ENCODE measurements at regions of chr12 and their contacts with region 1.

Region 1: GRCh38 chr12:20601668-20602280 is 93.4 kb upstream of the SLCO1C1 start:
- DNase-seq: no peak
- ATAC-seq: no peak
- H3K4me3 ChIP-seq: no peak overlapping the region
- H3K27ac ChIP-seq: peak overlapping the region in 3 of 4 donors; percentile 27 to 48 (median 36)
- H3K4me1 ChIP-seq: no peaks in the 10 kb centered on the region
- H3K27me3 ChIP-seq: no peaks in the 10 kb centered on the region
- CTCF ChIP-seq: peak in 2 of 5 experiments; percentile 42 to 44
- POLR2A ChIP-seq: no peak

Region 2: DNA sequence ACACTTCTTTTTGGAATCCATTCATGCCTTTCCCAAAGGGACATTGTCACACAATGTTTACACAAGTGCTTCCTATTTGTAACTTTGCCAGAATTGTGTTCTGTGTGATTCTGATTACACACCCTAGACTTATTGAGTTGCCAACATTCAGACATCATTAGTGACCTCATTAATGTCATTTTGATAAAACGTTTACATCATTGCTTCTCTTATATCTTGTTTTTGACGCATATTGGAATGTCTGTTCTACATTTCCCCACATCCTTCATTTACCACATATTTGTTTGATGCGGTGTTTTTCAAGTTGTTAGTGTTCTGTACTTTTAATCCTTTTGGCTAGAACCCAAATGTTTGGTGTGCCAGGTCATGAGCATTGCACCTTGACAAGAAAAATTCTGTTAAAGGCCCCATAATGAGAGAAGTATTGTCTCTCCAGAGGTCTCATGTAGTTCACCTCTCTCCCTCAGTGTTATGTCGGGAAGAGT is 857.0 kb before region 1 on chr12:
- in situ Hi-C with region 1: no loop called
- intact Hi-C with region 1: loop called (anchors 5 kb)
- DNase-seq: no peak
- ATAC-seq: peak; percentile 36 to 50
- H3K4me3 ChIP-seq: no peak overlapping the region
- H3K27ac ChIP-seq: no peak overlapping the region
- H3K4me1 ChIP-seq: peaks cover 0 to 4% of the 10 kb centered on the region in 2 donors
- H3K27me3 ChIP-seq: no peaks in the 10 kb centered on the region
- CTCF ChIP-seq: no peak
- POLR2A ChIP-seq: no peak

Region 3: DNA sequence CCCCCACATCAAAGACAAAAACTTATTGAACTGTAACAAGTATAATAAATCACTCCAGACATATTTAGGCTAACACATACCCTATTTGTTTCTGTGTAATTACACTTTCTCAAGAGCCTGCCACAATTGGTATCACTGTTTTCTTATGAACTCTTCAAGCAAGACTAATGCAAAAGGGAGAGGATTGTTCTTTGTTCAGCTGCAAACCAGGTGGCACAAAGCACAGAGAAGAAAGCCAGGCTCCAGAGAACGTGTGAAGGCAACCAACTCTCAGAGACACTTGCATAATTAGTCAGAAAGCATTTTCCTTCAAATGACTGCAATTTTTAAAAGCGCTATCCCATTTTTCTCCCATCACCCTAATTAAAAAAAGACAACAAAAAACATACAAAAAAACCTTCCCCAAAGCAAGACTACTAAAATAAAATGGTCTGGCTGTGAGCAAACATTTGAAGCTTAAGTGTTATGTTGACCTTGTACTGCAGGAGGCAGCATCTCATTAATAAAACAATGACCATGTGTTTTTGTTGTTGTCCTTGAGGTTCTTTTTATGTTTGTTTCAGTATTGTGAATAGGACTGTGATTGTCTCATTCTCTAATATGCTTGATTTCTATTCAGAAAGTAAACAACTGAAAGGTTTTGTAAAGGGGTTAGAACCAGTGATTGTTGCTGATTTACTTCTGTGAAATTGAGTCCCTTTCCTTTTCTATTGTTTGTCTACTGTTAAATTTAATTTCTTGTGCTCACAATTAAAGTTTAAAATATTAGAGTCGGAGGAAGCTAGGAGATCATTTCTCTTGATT is 686.2 kb before region 1 on chr12:
- in situ Hi-C with region 1: loop called in 1 of 4 experiments (anchors 25 kb)
- intact Hi-C with region 1: loop called (anchors 5 kb)
- DNase-seq: no peak
- ATAC-seq: no peak
- H3K4me3 ChIP-seq: no peak overlapping the region
- H3K27ac ChIP-seq: no peak overlapping the region
- H3K4me1 ChIP-seq: peaks cover 0 to 6% of the 10 kb centered on the region in 2 donors
- H3K27me3 ChIP-seq: no peaks in the 10 kb centered on the region
- CTCF ChIP-seq: peak; percentile 26 to 48 (median 42)
- POLR2A ChIP-seq: no peak

Region 4: DNA sequence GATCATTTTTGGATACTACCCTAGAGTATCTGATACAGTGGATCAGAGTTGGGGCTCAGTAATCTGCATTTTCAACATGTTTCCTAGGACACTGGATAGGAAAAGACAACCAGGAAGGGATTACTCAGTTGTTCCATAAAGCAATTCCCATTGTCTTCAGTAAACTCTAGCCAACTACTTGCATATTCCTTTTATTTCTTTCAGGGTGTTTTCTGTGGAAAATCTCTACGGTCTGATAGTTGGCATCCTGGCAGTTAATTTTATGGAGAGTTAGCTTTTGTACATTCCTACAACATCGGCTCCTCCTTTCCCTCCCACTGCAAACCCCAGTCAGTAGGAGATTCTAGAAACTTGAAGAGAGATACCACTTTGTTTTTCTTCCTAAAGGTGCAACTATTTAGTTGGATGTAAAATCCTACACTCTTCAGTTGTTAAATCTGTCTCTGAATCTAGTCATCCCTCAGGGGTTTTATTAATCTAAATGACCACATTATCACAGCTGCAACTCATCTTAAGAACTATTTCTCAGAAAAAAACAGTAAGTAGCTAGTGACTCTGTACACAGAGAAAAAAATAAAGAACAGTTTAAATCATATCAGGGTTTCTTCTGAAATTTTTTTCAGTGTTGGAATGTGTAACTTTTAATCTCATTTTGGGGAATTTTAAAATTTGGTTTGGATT is 129.5 kb before region 1 on chr12:
- in situ Hi-C with region 1: no loop called
- intact Hi-C with region 1: loop called (anchors 5 kb)
- DNase-seq: no peak
- ATAC-seq: no peak
- H3K4me3 ChIP-seq: no peak overlapping the region
- H3K27ac ChIP-seq: no peak overlapping the region
- H3K4me1 ChIP-seq: no peaks in the 10 kb centered on the region
- H3K27me3 ChIP-seq: no peaks in the 10 kb centered on the region
- CTCF ChIP-seq: no peak
- POLR2A ChIP-seq: no peak

Region 5: DNA sequence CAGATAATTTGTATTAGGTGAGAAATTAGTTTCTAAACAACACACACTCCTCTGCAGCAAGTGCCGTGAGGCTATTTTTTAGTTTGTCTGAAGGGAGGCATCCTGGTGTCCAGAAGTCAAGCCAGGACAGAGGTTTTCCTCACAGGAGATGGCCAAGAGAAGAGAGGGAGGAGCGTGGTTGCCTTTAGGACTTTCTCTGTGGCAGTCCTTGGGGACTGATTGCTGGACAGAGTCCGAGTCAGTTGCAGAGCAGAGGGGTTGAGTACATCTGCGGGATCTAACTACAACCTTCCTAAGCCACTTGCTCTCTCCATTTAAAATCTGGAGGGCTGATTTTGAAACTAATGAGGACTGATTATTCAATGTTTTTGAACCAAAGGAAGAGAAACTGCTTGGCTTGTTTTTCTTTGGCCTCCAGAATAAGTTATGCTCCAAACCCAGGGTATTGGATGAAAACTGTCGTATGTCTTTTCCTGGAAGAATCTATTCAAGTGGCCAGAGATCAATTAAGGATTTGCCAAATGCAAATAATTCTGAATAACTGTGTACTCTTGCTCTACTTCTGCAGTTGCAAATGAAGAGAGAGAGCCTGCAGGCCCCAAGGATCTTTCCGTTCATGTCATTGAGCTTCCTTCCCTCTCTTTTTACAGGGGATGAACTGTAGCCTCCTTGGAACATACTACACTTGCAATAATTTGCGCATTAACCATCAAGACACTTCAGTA is 94.6 kb after region 1 on chr12:
- in situ Hi-C with region 1: no loop called
- intact Hi-C with region 1: no loop called
- DNase-seq: peak; percentile 4 to 19
- ATAC-seq: no peak
- H3K4me3 ChIP-seq: no peak overlapping the region
- H3K27ac ChIP-seq: no peak overlapping the region
- H3K4me1 ChIP-seq: no peaks in the 10 kb centered on the region
- H3K27me3 ChIP-seq: no peaks in the 10 kb centered on the region
- CTCF ChIP-seq: no peak
- POLR2A ChIP-seq: no peak